Spleen (tissue), 13 donors: ENCODE measurements at regions of chr6 and their contacts with region 1.

Region 1: GRCh38 chr6:30489081-30490025 is at the start of gene HLA-E:
- DNase-seq: peak; percentile 94
- H3K4me3 ChIP-seq: peak within 1 kb of the TSS; percentile 96 to 100 (median 99)
- H3K27ac ChIP-seq: peak within 1 kb of the TSS; percentile 99 to 100 (median 100)
- H3K4me1 ChIP-seq: peaks cover 41 to 61% (median 51%) of the 10 kb centered on the region in 6 donors
- H3K27me3 ChIP-seq: no peaks in the 10 kb centered on the region
- CTCF ChIP-seq: no peak
- POLR2A ChIP-seq: peak; percentile 99
- total RNA-seq, gene HLA-E: 1,072 to 2,111 (median 1,510) TPM

Region 2: DNA sequence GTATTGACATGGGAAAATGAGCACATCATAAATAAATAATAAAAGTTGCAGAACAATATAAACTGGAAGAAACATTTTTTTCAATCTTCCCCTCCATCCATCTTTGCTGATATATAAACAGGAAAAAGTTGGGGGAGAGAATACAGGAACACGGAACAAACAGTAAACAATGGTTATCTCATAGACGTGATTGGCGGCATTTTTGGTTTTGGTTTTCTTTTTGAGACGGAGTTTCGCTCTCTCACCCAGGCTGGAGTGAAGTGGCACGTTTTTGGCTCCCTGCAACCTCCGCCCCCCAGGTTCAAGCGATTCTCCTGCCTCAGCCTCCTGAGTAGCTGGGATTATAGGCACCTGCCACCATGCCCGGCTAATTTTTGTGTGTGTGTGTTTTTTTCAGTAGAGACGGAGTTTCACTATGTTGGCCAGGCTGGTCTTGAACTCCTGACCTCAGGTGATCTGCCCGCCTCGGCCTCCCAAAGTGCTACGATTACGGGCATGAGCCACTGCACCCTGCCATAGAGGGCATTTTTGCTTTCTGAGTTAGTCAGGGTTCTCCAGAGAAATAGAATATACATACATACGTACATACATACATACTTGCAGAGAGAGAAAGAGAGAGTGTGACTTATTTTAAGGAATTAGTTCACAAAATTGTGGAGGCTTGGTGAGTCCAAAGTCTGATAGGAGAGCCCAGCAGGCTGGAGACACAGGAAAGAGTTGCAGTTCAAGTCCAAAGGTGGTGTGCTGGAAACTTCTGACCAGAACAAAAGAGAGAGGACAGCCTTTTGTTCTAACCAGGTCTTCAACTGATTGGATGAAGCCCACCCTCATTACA is 44.3 kb after region 1 on chr6:
- intact Hi-C with region 1: loop called (anchors 5 kb)
- DNase-seq: no peak
- H3K4me3 ChIP-seq: peak overlapping the region in 3 of 8 donors; percentile 15 to 55 (median 37)
- H3K27ac ChIP-seq: peak overlapping the region in 5 of 8 donors; percentile 39 to 85 (median 76)
- H3K4me1 ChIP-seq: peaks cover 9 to 47% (median 36%) of the 10 kb centered on the region in 6 donors
- H3K27me3 ChIP-seq: no peaks in the 10 kb centered on the region
- CTCF ChIP-seq: no peak
- POLR2A ChIP-seq: no peak

Region 3: GRCh38 chr6:30672445-30673253 is 183.3 kb after region 1 on chr6 and contains the start of gene DHX16:
- intact Hi-C with region 1: loop called (anchors 10 kb)
- DNase-seq: peak; percentile 95
- H3K4me3 ChIP-seq: peak within 1 kb of the TSS; percentile 88 to 100 (median 97)
- H3K27ac ChIP-seq: peak within 1 kb of the TSS; percentile 40 to 93 (median 86)
- H3K4me1 ChIP-seq: peaks cover 11 to 58% (median 31%) of the 10 kb centered on the region in 6 donors
- H3K27me3 ChIP-seq: no peaks in the 10 kb centered on the region
- CTCF ChIP-seq: peak; percentile 80 to 95 (median 89)
- POLR2A ChIP-seq: peak in 2 of 3 donors; percentile 20 to 34
- total RNA-seq, gene DHX16: 30.0 to 39.6 (median 35.4) TPM